ENCODE measurements at regions of chr7 and their contacts with region 1.

Region 1: DNA sequence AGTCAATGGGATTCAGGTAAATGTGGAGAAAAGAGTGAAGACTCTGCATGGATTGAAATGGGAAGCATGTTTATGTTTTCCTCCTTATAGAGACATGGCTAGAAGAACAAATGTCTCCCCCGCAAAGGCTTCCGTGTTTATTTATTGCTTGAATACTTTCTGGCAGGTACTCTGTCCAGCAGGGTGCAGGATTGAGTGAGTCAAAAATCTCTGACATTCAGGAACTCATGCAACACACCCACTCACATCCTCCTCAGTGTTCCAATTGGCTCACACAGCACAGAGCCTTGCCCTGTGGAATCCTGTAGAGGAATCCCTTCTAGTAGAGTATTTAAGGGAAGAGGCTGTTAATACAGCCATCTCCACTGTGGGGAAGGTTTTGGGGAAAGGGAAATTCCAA is 290.3 kb upstream of the VWC2 start:
- DNase-seq: no peak
- ATAC-seq: peak; percentile 70
- H3K4me3 ChIP-seq: no peak overlapping the region
- H3K27ac ChIP-seq: no peak overlapping the region
- H3K4me1 ChIP-seq: no peaks in the 10 kb centered on the region
- H3K27me3 ChIP-seq: no peaks in the 10 kb centered on the region
- CTCF ChIP-seq: peak; percentile 35 to 44 (median 38); a peak in 5 of 6 replicates
- EP300 ChIP-seq: no peak
- POLR2A ChIP-seq: no peak
- RAD21 ChIP-seq: peak; percentile 65

Region 2: GRCh38 chr7:49150486-49150885 is 332.7 kb before region 1 on chr7:
- CTCF ChIA-PET with region 1: no interaction called
- POLR2A ChIA-PET with region 1: no interaction called
- RAD21 ChIA-PET with region 1: no interaction called
- SMC1A ChIA-PET with region 1: no interaction called
- in situ Hi-C with region 1: no loop called
- intact Hi-C with region 1: no loop called
- DNase-seq: no peak
- ATAC-seq: no peak
- H3K4me3 ChIP-seq: no peak overlapping the region
- H3K27ac ChIP-seq: no peak overlapping the region
- H3K4me1 ChIP-seq: no peaks in the 10 kb centered on the region
- H3K27me3 ChIP-seq: no peaks in the 10 kb centered on the region
- CTCF ChIP-seq: no peak
- EP300 ChIP-seq: no peak
- POLR2A ChIP-seq: no peak
- RAD21 ChIP-seq: no peak

Region 3: DNA sequence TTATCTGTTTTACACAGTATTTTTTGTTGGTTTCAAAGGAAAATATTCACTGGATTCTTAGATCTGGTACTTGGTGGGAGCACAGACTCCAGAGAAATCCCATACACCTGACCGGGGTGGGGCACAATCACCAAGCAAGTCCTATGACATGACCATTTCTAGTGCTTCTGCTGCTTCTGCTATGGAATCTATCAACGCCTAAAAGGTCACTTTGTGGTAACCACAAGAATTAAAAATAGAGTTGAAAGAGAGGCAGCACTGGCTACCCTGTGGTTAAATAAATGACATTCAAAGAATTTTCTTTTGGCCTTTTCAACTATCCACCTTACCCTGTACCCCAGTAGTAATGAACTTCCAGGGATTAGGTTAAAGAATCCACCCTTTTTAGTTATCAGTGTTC is 39.6 kb before region 1 on chr7:
- CTCF ChIA-PET with region 1: no interaction called
- POLR2A ChIA-PET with region 1: no interaction called
- RAD21 ChIA-PET with region 1: no interaction called
- SMC1A ChIA-PET with region 1: no interaction called
- in situ Hi-C with region 1: no loop called
- intact Hi-C with region 1: no loop called
- DNase-seq: no peak
- ATAC-seq: no peak
- H3K4me3 ChIP-seq: no peak overlapping the region
- H3K27ac ChIP-seq: no peak overlapping the region
- H3K4me1 ChIP-seq: no peaks in the 10 kb centered on the region
- H3K27me3 ChIP-seq: no peaks in the 10 kb centered on the region
- CTCF ChIP-seq: no peak
- EP300 ChIP-seq: no peak
- POLR2A ChIP-seq: no peak
- RAD21 ChIP-seq: no peak

Region 4: DNA sequence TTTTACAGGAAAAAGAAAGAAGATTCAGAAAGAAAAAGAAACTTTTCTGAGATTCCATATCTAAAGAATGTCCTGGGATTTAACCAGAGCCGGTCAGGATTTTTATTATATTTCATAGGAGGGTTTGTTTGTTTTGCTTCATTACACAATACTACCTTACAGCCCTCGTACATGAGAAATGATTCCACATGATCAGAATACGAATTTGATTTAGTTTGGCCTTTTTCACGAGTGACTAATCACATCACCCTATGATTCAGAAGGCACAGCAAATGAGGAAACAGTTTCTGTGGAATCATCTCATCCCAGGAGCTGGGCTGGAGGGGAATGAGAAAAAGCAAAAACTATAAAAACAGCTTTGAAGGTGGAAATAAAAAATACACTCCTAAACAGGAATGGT is 235.6 kb after region 1 on chr7:
- CTCF ChIA-PET with region 1: no interaction called
- POLR2A ChIA-PET with region 1: no interaction called
- RAD21 ChIA-PET with region 1: no interaction called
- SMC1A ChIA-PET with region 1: no interaction called
- in situ Hi-C with region 1: no loop called
- intact Hi-C with region 1: no loop called
- DNase-seq: no peak
- ATAC-seq: no peak
- H3K4me3 ChIP-seq: no peak overlapping the region
- H3K27ac ChIP-seq: no peak overlapping the region
- H3K4me1 ChIP-seq: no peaks in the 10 kb centered on the region
- H3K27me3 ChIP-seq: peaks cover 0 to 2% of the 10 kb centered on the region in 2 experiments; a peak in 2 of 4 replicates
- CTCF ChIP-seq: no peak
- EP300 ChIP-seq: no peak
- POLR2A ChIP-seq: no peak
- RAD21 ChIP-seq: no peak

Region 5: DNA sequence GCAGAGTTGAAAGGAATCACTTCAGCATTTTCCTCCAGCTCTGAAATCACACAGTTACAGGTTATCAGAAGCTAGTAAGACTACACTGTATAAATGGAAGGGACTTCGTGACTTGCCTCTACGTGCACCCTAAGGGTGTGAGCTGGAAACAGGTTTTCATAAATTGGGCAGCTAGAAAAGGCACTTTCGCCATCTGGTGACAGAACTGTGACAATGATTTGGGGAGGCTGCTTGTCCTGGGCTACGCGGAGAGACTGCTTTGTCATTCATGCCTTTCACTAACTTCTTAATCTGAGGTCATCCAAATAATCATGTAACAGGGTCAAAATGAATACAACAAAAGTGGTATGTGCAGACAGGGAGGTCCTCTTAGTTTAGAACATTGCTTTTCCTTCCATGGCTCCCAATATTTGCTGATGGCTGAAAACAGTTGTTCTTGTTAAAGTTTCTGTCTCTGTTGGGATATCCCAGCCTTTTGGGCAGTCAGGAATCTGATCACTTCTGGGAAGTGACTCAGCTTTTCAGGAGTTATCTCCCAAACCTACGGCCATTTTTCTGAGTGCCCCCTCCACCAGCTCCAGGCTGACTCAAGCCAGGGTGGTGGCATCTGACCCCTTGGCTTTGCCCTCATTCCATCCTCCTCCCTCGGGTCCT is 308.1 kb after region 1 on chr7:
- CTCF ChIA-PET with region 1: interaction called, 5 read pairs
- POLR2A ChIA-PET with region 1: no interaction called
- RAD21 ChIA-PET with region 1: interaction called, 6 read pairs
- SMC1A ChIA-PET with region 1: no interaction called
- in situ Hi-C with region 1: loop called (anchors 25 kb)
- intact Hi-C with region 1: loop called (anchors 1 kb)
- DNase-seq: no peak
- ATAC-seq: peak; percentile 95
- H3K4me3 ChIP-seq: no peak overlapping the region
- H3K27ac ChIP-seq: no peak overlapping the region
- H3K4me1 ChIP-seq: no peaks in the 10 kb centered on the region
- H3K27me3 ChIP-seq: no peaks in the 10 kb centered on the region; a peak in 1 of 4 replicates
- CTCF ChIP-seq: peak; percentile 62 to 85 (median 70)
- EP300 ChIP-seq: no peak
- POLR2A ChIP-seq: no peak
- RAD21 ChIP-seq: peak; percentile 91

Region 6: DNA sequence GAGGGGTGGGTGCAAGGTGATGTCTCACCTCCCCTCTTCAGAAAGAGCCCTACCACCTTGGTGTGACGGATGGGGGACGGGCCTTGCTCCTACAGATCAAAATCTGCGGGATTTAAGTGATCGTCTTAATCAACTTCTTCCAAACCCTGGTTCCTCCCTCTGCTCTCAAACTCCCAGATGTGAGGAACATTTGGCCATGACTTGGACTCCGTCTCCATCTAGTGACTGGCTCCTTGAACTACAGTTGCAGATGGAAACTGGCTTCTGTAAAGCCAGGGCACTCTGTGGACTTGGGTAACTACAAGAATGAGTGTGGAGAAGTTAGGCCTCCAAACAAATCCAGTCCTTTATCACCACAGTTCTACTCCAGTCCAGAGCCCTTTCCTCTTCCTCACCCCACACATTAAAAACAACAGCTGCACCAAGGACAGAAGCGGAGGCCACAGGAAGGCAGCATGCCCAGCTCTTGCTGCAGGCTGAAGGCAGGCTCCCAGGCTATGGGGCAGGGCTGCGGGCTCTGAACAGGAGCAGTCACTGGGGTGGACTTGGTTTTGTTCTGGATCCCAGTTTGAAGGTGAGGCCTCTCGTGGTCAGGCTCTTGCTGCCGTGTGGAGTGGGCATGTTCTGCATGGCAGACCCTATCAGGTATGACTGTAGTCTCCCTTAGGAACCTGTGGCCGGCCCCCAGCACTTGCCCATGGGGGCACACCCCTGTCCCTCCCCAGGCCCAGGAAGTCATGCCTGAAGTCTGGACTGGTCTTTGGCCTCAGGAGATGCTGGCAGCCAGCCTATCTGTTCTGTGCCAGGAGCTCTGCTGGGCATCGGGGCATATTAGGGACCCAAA is 369.7 kb after region 1 on chr7:
- CTCF ChIA-PET with region 1: no interaction called
- POLR2A ChIA-PET with region 1: no interaction called
- RAD21 ChIA-PET with region 1: no interaction called
- SMC1A ChIA-PET with region 1: no interaction called
- in situ Hi-C with region 1: no loop called
- intact Hi-C with region 1: loop called (anchors 2 kb)
- DNase-seq: no peak
- ATAC-seq: peak; percentile 88
- H3K4me3 ChIP-seq: no peak overlapping the region
- H3K27ac ChIP-seq: no peak overlapping the region
- H3K4me1 ChIP-seq: no peaks in the 10 kb centered on the region
- H3K27me3 ChIP-seq: peaks cover 0 to 3% of the 10 kb centered on the region in 2 experiments; a peak in 1 of 4 replicates
- CTCF ChIP-seq: peak; percentile 86 to 91 (median 86)
- EP300 ChIP-seq: no peak
- POLR2A ChIP-seq: no peak
- RAD21 ChIP-seq: peak; percentile 97